CD14-positive monocyte (primary cell): ENCODE measurements at regions of chrX and their contacts with region 1.

Region 1: GRCh38 chrX:66074920-66075879 is 35.3 kb upstream of the VSIG4 start:
- DNase-seq: peak; percentile 79 to 86 (median 85)
- H3K4me3 ChIP-seq: peak overlapping the region in 2 of 3 experiments; percentile 31 to 69
- H3K4me3 Mint-ChIP-seq: peak overlapping the region; percentile 74 to 83
- H3K27ac ChIP-seq: peak overlapping the region; percentile 43 to 81
- H3K27ac Mint-ChIP-seq: peak overlapping the region; percentile 85 to 93 (median 88)
- H3K4me1 ChIP-seq: peaks cover 40 to 48% of the 10 kb centered on the region in 2 donors
- H3K4me1 Mint-ChIP-seq: peaks cover 42% of the 10 kb centered on the region
- H3K27me3 ChIP-seq: peaks cover 0 to 19% of the 10 kb centered on the region in 2 donors
- H3K27me3 Mint-ChIP-seq: peaks cover 0 to 20% (median 0%) of the 10 kb centered on the region in 3 donors
- CTCF ChIP-seq: no peak

Region 2: DNA sequence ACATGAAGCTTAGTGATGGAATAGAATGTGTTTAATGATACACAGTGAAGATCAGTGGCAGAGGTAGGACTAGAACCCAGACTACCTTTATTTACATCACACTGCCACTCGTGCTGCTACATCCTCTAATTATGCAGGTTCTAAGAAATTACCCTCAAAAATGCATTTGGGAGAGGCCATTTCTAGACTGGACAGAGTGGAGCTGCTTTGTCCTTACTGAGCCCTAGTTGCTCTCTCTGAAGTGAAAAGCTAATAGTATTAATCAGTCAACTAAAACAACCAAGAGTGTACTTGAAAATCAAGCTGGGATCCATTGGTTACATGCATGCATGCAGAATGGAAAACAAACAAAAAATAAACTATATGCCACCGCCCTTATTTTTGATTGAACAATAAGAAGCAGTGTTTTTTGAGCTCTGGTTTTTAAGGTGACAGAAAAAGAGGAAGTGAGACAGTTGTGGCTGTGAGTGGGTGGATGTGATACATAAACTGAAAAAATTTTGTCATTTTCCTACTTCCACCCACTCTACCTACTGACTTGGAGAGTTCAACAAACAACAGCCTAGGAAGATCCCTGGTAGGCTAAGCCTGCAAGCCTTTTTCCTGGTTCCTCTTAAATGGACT is 28.5 kb before region 1 on chrX:
- intact Hi-C with region 1: loop called in 1 of 2 experiments (anchors 2 kb)
- DNase-seq: peak; percentile 54 to 76 (median 67)
- H3K4me3 ChIP-seq: peak overlapping the region in 1 of 3 experiments; percentile 34
- H3K4me3 Mint-ChIP-seq: no peak overlapping the region
- H3K27ac ChIP-seq: peak overlapping the region in 1 of 2 donors; percentile 62
- H3K27ac Mint-ChIP-seq: peak overlapping the region; percentile 61 to 87 (median 80)
- H3K4me1 ChIP-seq: peaks cover 50 to 64% of the 10 kb centered on the region in 2 donors
- H3K4me1 Mint-ChIP-seq: peaks cover 48% of the 10 kb centered on the region
- H3K27me3 ChIP-seq: peaks cover 0 to 2% of the 10 kb centered on the region in 2 donors
- H3K27me3 Mint-ChIP-seq: peaks cover 0 to 15% (median 2%) of the 10 kb centered on the region in 3 donors
- CTCF ChIP-seq: no peak

Region 3: DNA sequence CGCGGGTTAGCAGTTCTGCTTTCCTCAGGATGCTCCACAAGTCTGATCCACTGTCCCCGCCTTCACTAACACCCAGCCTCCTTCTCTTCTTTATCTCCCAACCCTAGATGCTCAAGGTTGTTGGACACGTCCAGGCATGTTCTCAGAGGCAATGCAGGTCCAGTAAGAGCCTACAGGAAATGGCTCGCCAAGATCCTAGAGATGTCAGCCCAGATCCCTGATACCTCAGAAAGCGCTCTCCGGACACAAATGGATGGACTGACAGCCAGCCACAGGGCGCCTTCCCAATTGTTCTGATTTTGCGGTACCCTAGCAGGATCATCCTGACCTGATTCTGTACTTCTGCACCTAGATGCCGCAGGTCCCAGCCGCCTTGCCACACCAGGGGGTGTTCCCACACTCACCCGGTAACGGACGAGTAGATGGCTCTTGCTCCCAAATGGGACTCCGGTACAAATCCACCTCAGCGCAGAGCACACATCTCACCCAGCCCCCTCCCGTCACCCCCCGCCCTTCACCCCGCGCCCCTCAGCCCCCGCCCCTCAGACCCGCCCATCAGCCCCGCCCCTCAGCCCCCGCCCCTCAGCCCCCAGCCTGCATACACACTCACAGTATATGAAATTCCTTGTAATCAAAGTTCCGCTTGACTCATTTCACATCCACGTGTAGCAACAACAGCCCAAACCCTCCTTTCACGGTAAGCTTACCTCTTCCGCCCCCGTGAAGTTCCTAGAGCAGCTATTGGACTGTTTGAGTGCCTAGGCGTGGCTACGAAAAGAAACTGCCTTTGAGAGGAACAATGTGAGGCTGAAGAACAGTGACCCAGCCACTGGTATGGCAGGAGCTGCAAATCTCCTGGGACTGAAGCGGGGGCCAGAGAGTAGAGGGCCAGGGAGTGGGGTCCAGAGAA is 563.6 kb after region 1 on chrX and contains the start of gene EDA2R:
- intact Hi-C with region 1: no loop called
- DNase-seq: no peak
- H3K4me3 ChIP-seq: peak within 1 kb of the TSS in 1 of 3 experiments; percentile 27
- H3K4me3 Mint-ChIP-seq: peak within 1 kb of the TSS; percentile 43 to 57
- H3K27ac ChIP-seq: no peak within 1 kb of the TSS
- H3K27ac Mint-ChIP-seq: peak within 1 kb of the TSS in 1 of 7 donors; percentile 9
- H3K4me1 ChIP-seq: no peaks in the 10 kb centered on the region
- H3K4me1 Mint-ChIP-seq: peaks cover 11% of the 10 kb centered on the region
- H3K27me3 ChIP-seq: no peaks in the 10 kb centered on the region
- H3K27me3 Mint-ChIP-seq: peaks cover 0 to 6% (median 2%) of the 10 kb centered on the region in 3 donors
- CTCF ChIP-seq: no peak
- polyA plus RNA-seq, gene EDA2R: 0.03 TPM in 1 of 3 donors, not detected in the others